Astrocyte of the cerebellum (primary cell): ENCODE measurements at regions of chr16 and their contacts with region 1.

Region 1: GRCh38 chr16:66416939-66417700 is 10.0 kb upstream of the BEAN1 start:
- DNase-seq: no peak
- H3K4me3 ChIP-seq: no peak overlapping the region
- CTCF ChIP-seq: no peak

Region 2: GRCh38 chr16:66459878-66460277 is 42.8 kb after region 1 on chr16:
- in situ Hi-C with region 1: loop called (anchors 5 kb)
- DNase-seq: no peak
- H3K4me3 ChIP-seq: no peak overlapping the region
- CTCF ChIP-seq: no peak

Region 3: DNA sequence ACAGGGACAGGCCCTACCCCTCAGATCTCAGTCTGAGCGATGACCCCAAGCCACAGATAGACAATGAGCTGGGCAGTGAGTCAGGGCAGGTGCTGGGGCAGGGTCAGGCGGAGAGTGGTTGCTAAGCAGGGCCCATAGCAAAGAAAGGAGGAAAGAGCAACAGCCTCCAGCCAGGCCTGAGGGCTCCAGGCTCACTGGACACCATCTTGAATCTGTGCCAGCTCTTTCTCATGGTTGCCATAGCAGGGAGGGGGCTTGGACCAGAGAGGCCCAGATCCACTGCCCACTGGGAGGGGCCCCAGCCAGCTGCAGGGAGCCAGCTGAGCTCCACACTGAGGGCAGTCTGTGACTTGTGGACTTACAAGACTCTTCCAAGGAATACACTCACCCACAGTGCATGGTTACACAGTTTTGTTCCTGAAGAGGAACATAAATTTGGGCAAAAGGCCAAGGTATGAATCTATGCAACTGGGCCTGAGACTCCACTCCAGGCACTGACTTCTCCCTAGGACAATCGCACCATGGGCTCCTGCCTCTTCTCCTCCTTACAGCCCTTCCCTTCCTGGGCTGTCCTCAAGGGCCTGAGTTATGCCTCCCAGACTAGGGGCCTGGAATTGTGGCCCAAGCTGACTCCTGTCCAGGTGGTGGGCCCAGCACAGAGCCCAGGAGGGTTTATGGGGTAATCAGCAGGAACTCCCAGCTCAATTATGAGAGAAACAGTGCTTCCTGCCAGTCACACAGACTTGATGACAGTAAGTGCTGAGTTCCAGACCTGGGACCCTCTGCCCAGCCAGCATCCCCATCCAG is 69.9 kb after region 1 on chr16:
- in situ Hi-C with region 1: loop called (anchors 5 kb)
- DNase-seq: peak; percentile 63
- H3K4me3 ChIP-seq: no peak overlapping the region
- CTCF ChIP-seq: no peak

Region 4: DNA sequence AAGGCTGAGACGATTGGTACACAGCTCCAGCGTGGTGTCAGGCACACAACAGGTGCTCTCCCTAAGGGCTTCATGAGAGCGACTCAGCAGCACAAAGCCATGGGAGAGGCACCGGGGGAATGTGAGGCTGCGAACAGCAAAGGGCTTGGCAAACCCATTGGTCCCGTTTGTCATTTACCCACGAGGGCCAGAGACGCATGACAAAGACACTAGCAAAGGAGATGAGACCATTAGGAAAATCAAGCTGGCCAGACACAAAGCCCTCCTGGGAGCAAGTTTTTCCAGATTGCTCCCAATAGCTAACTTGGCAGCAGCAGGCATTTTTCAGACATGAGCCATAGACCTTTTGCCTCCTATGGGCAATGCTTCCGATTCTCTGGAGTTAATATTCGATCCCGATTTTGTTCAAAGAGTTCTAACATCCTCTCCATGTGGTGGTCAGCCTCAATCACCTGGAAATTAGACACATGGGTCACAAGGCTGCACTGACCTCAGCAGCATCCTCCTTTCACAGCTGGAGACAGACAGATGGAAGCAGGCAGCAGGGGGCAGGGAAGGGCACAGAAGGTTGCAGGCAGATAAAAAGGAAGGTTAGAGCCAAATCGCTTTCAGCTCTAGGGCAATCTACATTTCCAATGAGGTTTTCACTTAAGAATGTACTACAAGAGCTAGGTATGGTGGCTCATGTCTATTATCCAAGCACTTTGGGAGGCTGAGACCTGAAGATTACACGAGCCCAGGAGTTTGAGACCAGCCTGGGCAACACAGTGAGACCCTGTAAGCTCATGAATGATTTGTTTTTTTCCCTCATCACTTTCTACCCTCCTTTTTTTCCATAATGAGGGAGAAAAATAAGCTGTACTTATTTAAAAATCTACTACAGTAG is 94.7 kb after region 1 on chr16:
- in situ Hi-C with region 1: loop called (anchors 5 kb)
- DNase-seq: peak; percentile 61
- H3K4me3 ChIP-seq: no peak overlapping the region
- CTCF ChIP-seq: no peak